PC-9 (cell line): ENCODE measurements at regions of chr1 and their contacts with region 1.

Region 1: DNA sequence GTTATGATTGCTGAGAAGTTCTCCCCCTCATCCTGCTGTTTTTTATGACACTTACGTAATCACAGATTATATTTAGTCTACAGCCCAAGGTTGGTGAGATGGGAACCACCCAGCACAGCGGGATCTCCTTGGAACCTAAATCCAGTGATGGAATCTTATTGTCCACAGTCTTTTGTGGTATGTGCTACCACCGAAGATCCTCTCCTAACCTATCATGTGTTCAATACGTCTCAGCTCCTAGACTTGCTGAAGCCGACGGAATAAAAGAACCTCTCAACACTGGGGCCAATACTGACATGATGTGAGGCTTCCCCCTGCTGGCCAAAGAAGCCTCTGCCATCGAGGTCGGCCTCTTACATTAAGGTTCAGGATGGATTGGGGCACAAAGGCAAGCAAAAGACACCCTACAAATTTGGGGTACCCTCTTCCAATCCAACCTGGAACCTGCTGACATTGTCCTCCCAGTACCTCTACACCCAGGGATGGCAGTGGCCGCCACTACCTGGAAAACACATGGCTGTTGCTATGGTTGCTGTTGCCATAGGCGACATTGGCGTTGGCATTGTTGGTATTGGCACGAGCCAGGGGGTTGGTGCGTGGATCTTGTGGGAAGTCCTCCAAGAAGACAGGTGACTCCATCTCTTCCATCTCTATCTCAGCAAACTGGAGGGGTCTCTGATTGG is 19.4 kb upstream of the KIF21B start:
- DNase-seq: peak; percentile 51 to 52
- H3K4me3 ChIP-seq: no peak overlapping the region
- H3K27ac ChIP-seq: no peak overlapping the region
- H3K4me1 ChIP-seq: no peaks in the 10 kb centered on the region
- H3K27me3 ChIP-seq: peaks cover 18% of the 10 kb centered on the region
- CTCF ChIP-seq: peak; percentile 91

Region 2: GRCh38 chr1:200890818-200891773 is 151.8 kb before region 1 on chr1:
- CTCF ChIA-PET with region 1: no interaction called
- POLR2A ChIA-PET with region 1: no interaction called
- intact Hi-C with region 1: loop called (anchors 2 kb)
- DNase-seq: peak; percentile 61 to 63
- H3K4me3 ChIP-seq: peak overlapping the region; percentile 66
- H3K27ac ChIP-seq: peak overlapping the region; percentile 76
- H3K4me1 ChIP-seq: peaks cover 66% of the 10 kb centered on the region
- H3K27me3 ChIP-seq: no peaks in the 10 kb centered on the region
- CTCF ChIP-seq: peak; percentile 66; the same call in 1 of the 2 replicates

Region 3: GRCh38 chr1:200947059-200947566 is 95.8 kb before region 1 on chr1:
- CTCF ChIA-PET with region 1: no interaction called
- POLR2A ChIA-PET with region 1: no interaction called
- intact Hi-C with region 1: no loop called
- DNase-seq: no peak
- H3K4me3 ChIP-seq: no peak overlapping the region
- H3K27ac ChIP-seq: no peak overlapping the region
- H3K4me1 ChIP-seq: no peaks in the 10 kb centered on the region
- H3K27me3 ChIP-seq: no peaks in the 10 kb centered on the region
- CTCF ChIP-seq: no peak

Region 4: DNA sequence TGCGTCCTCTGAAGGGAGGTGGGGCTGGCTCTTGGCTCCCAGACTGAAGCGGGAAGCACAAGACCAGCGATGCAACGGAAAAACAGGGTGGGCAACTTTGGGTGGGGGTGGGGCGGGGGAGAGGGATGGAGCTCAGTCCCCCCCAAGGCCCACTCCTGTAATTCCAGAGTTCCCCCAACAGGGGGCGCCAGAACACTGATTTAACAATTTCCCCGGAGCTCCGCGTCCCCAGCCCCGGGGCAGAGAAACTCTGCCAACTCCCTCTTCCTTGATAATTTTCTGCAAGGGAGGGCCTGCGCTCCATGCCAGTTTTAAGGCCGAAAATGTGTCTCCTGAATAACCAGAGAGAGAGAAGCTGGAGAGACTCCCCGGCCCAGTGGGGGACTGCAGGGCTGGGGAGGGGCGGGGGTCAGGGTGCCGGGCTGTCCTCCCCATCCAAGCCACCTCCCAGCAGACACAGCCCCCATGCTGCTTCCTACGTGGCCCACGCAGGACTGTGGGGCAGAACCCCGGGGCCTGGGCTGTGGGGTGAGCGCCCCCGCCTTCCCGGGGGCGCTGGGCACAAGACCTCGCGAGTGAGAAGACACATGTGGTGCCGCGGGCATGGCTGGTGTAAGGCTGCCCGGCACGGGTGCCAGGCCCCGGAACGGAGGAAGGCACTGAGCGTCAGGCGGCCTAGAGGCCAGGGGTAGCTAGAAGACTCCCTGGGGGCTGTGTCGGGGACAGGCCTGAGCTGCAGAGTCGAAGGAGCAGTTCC is 70.8 kb before region 1 on chr1:
- CTCF ChIA-PET with region 1: interaction called, 8 read pairs
- POLR2A ChIA-PET with region 1: interaction called, 5 read pairs
- intact Hi-C with region 1: loop called (anchors 1 kb)
- DNase-seq: peak; percentile 43 to 72
- H3K4me3 ChIP-seq: no peak overlapping the region
- H3K27ac ChIP-seq: no peak overlapping the region
- H3K4me1 ChIP-seq: peaks cover 24% of the 10 kb centered on the region
- H3K27me3 ChIP-seq: no peaks in the 10 kb centered on the region
- CTCF ChIP-seq: peak; percentile 92